ENCODE measurements at regions of chr6 and their contacts with region 1.

Region 1: GRCh38 chr6:169087443-169088041 is 166.1 kb downstream of the THBS2 start:
- DNase-seq: no peak
- ATAC-seq: no peak
- H3K4me3 ChIP-seq: no peak overlapping the region
- H3K4me3 Mint-ChIP-seq: no peak overlapping the region
- H3K27ac ChIP-seq: no peak overlapping the region
- H3K27ac Mint-ChIP-seq: no peak overlapping the region
- H3K4me1 ChIP-seq: no peaks in the 10 kb centered on the region
- H3K4me1 Mint-ChIP-seq: no peaks in the 10 kb centered on the region
- H3K27me3 ChIP-seq: no peaks in the 10 kb centered on the region
- H3K27me3 Mint-ChIP-seq: peaks cover 2% of the 10 kb centered on the region
- CTCF ChIP-seq: no peak

Region 2: GRCh38 chr6:169075211-169075914 is 12.2 kb before region 1 on chr6:
- CTCF ChIA-PET with region 1: no interaction called
- POLR2A ChIA-PET with region 1: no interaction called
- intact Hi-C with region 1: no loop called
- DNase-seq: no peak
- ATAC-seq: no peak
- H3K4me3 ChIP-seq: no peak overlapping the region
- H3K4me3 Mint-ChIP-seq: no peak overlapping the region
- H3K27ac ChIP-seq: no peak overlapping the region
- H3K27ac Mint-ChIP-seq: no peak overlapping the region
- H3K4me1 ChIP-seq: no peaks in the 10 kb centered on the region
- H3K4me1 Mint-ChIP-seq: no peaks in the 10 kb centered on the region
- H3K27me3 ChIP-seq: no peaks in the 10 kb centered on the region
- H3K27me3 Mint-ChIP-seq: peaks cover 4% of the 10 kb centered on the region
- CTCF ChIP-seq: no peak

Region 3: DNA sequence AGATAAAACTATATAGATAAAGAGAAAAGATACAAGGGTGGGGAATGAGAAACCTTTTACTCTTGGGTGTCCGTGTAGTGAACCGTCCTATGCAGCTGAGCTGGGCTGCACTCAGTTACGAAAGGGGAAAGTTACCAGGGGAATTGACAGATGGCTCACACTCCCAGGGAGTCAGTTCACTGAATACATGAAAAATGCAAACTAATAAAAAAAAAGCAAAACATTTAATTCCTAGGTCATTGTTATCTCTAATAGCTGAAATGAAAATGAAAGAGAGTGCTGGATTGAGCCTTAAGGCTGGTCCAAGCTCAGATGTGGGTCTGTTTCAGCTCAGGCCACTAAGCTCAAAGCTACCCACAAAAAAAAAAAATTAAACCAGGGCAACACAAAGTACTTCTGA is 28.1 kb after region 1 on chr6:
- CTCF ChIA-PET with region 1: no interaction called
- POLR2A ChIA-PET with region 1: no interaction called
- intact Hi-C with region 1: loop called in 1 of 2 experiments (anchors 2 kb)
- DNase-seq: no peak
- ATAC-seq: no peak
- H3K4me3 ChIP-seq: no peak overlapping the region
- H3K4me3 Mint-ChIP-seq: no peak overlapping the region
- H3K27ac ChIP-seq: no peak overlapping the region
- H3K27ac Mint-ChIP-seq: no peak overlapping the region
- H3K4me1 ChIP-seq: no peaks in the 10 kb centered on the region
- H3K4me1 Mint-ChIP-seq: no peaks in the 10 kb centered on the region
- H3K27me3 ChIP-seq: no peaks in the 10 kb centered on the region
- H3K27me3 Mint-ChIP-seq: no peaks in the 10 kb centered on the region
- CTCF ChIP-seq: no peak

Measured in CD8-positive, alpha-beta T cell (primary cell).